Ascending aorta (tissue), 2 donors: ENCODE measurements at regions of chr1 and their contacts with region 1.

Region 1: DNA sequence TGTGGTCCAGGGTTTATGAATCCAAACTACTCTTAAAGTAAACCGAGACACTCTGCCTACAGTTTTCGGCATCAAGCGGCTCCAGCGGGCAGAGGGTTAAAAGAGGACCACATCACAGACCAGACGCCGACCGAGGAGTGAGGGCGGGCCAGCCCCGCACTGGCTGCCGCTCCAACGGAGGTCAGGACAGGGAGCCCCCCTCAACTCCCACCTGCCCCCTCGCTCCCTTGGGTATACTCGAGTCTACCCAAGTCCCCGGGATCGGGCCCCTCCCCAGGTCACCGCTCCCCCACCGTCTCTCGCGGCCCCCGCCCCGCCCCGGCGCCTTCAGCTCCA is 312 bp downstream of the ARNT start:
- DNase-seq: peak; percentile 13 to 83
- H3K4me3 ChIP-seq: peak overlapping the region; percentile 87 to 99
- H3K27ac ChIP-seq: peak overlapping the region; percentile 97 to 99
- H3K4me1 ChIP-seq: no peaks in the 10 kb centered on the region
- H3K27me3 ChIP-seq: no peaks in the 10 kb centered on the region
- CTCF ChIP-seq: no peak

Region 2: DNA sequence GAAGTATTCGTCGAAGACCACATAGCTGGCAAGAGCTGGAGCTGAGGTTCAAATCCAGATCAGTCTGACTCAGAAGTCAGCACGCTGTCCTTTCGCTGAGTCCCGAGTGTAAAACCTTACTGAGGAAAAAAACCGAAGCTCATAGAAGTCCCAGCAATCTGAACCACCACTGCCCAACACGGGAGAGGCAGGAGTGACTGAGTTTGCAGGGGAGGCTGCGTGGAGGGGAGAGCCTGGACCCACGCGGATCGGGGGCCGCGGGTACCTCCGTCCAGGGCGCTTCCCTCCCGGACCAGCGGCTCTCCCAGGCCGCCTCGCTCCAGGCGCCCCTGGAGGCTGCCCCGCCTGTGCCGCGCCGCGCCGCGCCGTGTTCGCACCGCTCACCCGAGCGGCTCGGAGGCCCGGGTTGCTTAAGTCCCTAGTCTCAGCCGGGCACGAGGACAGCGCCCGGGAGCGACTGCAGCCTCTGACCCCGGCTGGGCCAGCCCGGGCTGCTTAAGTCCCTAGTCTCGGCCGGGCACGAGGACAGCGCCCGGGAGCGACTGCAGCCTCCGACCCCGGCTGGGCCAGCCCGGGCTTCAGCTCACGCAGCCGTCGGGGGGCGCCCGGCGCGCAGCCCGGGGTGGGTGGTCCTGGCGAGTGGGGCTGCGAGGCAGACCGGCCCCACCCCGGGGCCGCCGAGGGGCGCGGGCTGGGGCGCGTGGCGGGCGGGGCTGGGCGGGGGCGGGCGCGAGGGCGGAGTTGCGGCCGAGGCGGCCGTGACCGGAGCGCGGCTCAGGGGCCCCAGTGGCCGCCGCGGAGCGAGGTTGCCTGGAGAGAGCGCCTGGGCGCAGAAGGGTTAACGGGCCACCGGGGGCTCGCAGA is 327.2 kb before region 1 on chr1 and contains the start of gene ADAMTSL4:
- intact Hi-C with region 1: loop called (anchors 10 kb)
- DNase-seq: peak in 1 of 2 donors; percentile 87
- H3K4me3 ChIP-seq: peak within 1 kb of the TSS; percentile 70 to 88
- H3K27ac ChIP-seq: peak within 1 kb of the TSS; percentile 97 to 100
- H3K4me1 ChIP-seq: peaks cover 26 to 43% of the 10 kb centered on the region in 2 donors
- H3K27me3 ChIP-seq: no peaks in the 10 kb centered on the region
- CTCF ChIP-seq: peak in 1 of 3 experiments; percentile 33
- total RNA-seq, gene ADAMTSL4: 85.3 TPM

Region 3: GRCh38 chr1:150696590-150697524 is 179.2 kb before region 1 on chr1 and contains the start of gene GOLPH3L:
- intact Hi-C with region 1: loop called (anchors 10 kb)
- DNase-seq: peak; percentile 89 to 97
- H3K4me3 ChIP-seq: peak within 1 kb of the TSS; percentile 77 to 79
- H3K27ac ChIP-seq: peak within 1 kb of the TSS; percentile 29 to 61
- H3K4me1 ChIP-seq: peaks cover 0 to 2% of the 10 kb centered on the region in 2 donors
- H3K27me3 ChIP-seq: no peaks in the 10 kb centered on the region
- CTCF ChIP-seq: peak in 2 of 3 experiments; percentile 8 to 9
- total RNA-seq, gene GOLPH3L: 14.7 TPM

Region 4: DNA sequence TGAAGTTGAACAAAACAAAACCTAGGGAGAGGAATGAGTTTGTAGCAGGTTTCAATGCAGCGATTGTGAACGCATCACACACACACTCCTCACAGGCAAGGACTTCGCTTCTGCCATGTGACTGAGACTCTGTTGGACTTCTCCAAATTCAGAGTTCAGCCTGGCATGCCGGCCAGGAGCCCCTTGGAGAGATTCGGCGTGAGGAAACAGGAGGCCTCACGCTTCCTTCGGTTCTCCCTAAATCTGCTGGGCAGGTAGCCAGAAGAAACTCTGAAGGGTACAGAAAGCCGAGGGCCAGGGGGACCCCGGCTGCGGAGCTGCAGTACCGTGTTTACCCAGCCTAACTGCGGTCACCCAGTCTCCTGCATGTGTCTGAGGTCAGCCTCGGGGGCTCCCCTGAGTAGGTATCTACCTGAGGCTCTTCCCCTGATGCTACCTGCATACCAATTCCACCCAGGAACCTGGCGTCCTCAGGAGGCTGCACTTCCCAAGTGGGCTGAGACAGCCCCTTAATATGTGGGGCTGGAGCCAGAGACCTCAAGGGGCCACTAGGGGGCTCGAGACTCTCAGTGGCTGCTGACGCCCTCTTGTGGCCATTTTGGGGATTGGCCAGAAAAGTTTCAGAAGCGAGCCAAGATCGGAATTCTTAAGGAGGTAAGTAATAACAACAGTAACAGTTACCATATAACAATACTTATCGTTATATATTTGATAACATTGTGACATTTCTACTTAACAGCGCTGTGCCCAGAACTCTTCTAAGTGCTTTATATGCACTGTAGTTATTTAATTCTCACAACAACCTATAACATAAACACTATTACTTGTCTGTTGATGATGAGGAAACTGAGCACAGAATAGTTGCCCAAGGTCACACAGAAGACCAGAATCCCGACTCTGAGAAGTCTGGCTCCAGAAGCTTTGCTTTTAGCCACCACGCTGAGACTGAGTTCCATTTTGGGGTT is 103.3 kb after region 1 on chr1:
- intact Hi-C with region 1: loop called (anchors 2 kb)
- DNase-seq: peak; percentile 42 to 96
- H3K4me3 ChIP-seq: peak overlapping the region in 1 of 2 donors; percentile 50
- H3K27ac ChIP-seq: peak overlapping the region; percentile 95 to 99
- H3K4me1 ChIP-seq: peaks cover 11 to 34% of the 10 kb centered on the region in 2 donors
- H3K27me3 ChIP-seq: no peaks in the 10 kb centered on the region
- CTCF ChIP-seq: peak; percentile 99

Region 5: GRCh38 chr1:151059078-151059907 is 183.2 kb after region 1 on chr1 and contains the start of gene CDC42SE1:
- intact Hi-C with region 1: loop called (anchors 5 kb)
- DNase-seq: peak in 1 of 2 donors; percentile 92
- H3K4me3 ChIP-seq: peak within 1 kb of the TSS; percentile 83 to 93
- H3K27ac ChIP-seq: peak within 1 kb of the TSS; percentile 96
- H3K4me1 ChIP-seq: peaks cover 0 to 37% of the 10 kb centered on the region in 2 donors
- H3K27me3 ChIP-seq: no peaks in the 10 kb centered on the region
- CTCF ChIP-seq: peak; percentile 75 to 96 (median 89)
- total RNA-seq, gene CDC42SE1: 42.4 TPM